ENCODE measurements at regions of chr7 and their contacts with region 1.

Region 1: GRCh38 chr7:136956232-136956631 is 87.8 kb downstream of the CHRM2 start:
- DNase-seq: peak; percentile 87
- ATAC-seq: peak; percentile 70
- H3K4me3 ChIP-seq: no peak overlapping the region
- H3K27ac ChIP-seq: peak overlapping the region; percentile 100
- H3K4me1 ChIP-seq: peaks cover 20% of the 10 kb centered on the region
- H3K27me3 ChIP-seq: no peaks in the 10 kb centered on the region
- CTCF ChIP-seq: no peak
- POLR2A ChIP-seq: no peak
- RAD21 ChIP-seq: no peak

Region 2: GRCh38 chr7:136900005-136900404 is 56.2 kb before region 1 on chr7:
- CTCF ChIA-PET with region 1: interaction called, 3 read pairs
- POLR2A ChIA-PET with region 1: no interaction called
- dilution Hi-C with region 1: no loop called
- in situ Hi-C with region 1: no loop called
- intact Hi-C with region 1: loop called (anchors 5 kb)
- DNase-seq: no peak
- ATAC-seq: no peak
- H3K4me3 ChIP-seq: no peak overlapping the region
- H3K27ac ChIP-seq: no peak overlapping the region
- H3K4me1 ChIP-seq: peaks cover 15% of the 10 kb centered on the region
- H3K27me3 ChIP-seq: no peaks in the 10 kb centered on the region
- CTCF ChIP-seq: no peak
- POLR2A ChIP-seq: no peak
- RAD21 ChIP-seq: no peak

Region 3: DNA sequence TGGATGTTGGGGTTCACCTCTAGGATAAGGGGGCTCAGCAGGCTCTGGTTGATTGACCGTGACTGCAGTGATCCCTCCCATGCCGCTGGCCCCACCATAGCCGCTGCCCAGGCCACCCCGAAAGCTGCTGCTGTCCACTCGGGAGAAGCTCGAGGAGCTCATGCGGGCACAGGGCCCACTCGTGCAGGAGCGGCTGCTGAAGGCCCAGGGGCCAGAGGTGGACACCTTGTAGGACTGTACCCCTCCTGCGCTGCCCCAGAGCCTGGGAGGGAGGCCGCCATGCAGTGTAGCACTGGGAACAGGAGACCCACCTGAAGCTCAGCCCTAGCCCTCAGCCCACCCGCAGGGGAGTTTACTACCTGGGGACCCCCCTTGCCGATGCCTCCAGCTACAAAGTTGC is 17.8 kb before region 1 on chr7:
- CTCF ChIA-PET with region 1: no interaction called
- POLR2A ChIA-PET with region 1: no interaction called
- dilution Hi-C with region 1: no loop called
- in situ Hi-C with region 1: no loop called
- intact Hi-C with region 1: no loop called
- DNase-seq: no peak
- ATAC-seq: no peak
- H3K4me3 ChIP-seq: no peak overlapping the region
- H3K27ac ChIP-seq: no peak overlapping the region
- H3K4me1 ChIP-seq: peaks cover 14% of the 10 kb centered on the region
- H3K27me3 ChIP-seq: no peaks in the 10 kb centered on the region
- CTCF ChIP-seq: no peak
- POLR2A ChIP-seq: no peak
- RAD21 ChIP-seq: no peak

Region 4: DNA sequence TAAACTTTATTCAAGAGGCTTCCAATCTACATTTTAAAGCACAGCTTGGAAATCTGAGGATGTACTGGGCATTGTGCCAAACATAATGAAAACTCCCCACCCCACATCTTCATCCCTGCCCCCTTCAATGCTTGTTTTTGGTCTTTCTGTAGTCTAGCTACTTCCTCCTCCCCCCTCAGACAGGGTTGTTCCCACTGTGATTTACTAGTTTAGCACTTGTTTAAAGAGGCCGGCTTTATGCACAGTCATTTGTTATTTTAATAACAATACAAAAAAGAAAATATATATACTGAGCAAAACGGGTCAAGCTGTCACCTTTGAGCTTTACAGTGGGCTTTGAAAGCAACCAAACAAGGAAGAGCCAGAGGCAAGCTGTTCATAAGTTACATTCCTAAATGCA is 44.8 kb after region 1 on chr7:
- CTCF ChIA-PET with region 1: no interaction called
- POLR2A ChIA-PET with region 1: interaction called, 3 read pairs
- dilution Hi-C with region 1: no loop called
- in situ Hi-C with region 1: no loop called
- intact Hi-C with region 1: loop called (anchors 5 kb)
- DNase-seq: peak; percentile 55
- ATAC-seq: peak; percentile 52
- H3K4me3 ChIP-seq: no peak overlapping the region
- H3K27ac ChIP-seq: peak overlapping the region; percentile 97
- H3K4me1 ChIP-seq: peaks cover 29% of the 10 kb centered on the region
- H3K27me3 ChIP-seq: no peaks in the 10 kb centered on the region
- CTCF ChIP-seq: no peak
- POLR2A ChIP-seq: no peak
- RAD21 ChIP-seq: no peak

Region 5: DNA sequence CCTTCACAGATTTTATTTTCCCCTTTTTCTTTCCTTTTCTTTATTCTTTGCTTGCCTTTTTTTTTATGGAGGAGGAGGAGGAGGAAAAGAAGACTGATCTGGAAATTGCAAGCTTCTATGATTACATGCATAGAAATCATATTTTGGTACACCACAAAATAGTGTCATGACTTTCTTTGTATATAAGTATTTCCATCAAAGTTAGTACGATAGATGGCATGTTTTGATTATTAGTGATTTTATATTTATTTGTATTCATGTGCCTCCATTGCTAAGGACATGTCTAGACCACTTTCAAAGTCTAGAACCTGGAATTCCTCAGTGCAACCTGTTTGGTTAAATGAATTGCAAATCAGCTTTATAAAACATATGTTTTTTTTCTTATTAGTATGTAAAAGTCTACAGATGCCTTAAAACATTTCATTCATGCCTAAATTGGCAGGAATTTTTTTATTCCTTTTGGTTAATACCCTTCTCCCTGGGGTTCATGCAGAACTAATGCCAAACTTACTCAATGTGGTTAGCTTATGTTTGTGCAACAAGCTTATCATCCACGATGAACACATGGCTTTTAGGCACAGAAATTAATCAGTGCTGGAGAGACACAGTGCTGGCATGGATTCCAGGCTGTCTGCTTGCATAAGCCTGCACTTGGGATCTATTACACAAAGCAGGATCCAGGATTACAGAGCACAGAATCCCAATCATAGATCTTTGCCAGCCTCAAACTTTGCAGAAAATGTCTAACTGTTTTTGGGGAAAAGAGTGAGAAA is 125.3 kb after region 1 on chr7:
- CTCF ChIA-PET with region 1: interaction called, 4 read pairs
- POLR2A ChIA-PET with region 1: no interaction called
- dilution Hi-C with region 1: no loop called
- in situ Hi-C with region 1: no loop called
- intact Hi-C with region 1: loop called (anchors 5 kb)
- DNase-seq: peak; percentile 98
- ATAC-seq: peak; percentile 69
- H3K4me3 ChIP-seq: no peak overlapping the region
- H3K27ac ChIP-seq: peak overlapping the region; percentile 99
- H3K4me1 ChIP-seq: peaks cover 13% of the 10 kb centered on the region
- H3K27me3 ChIP-seq: no peaks in the 10 kb centered on the region
- CTCF ChIP-seq: no peak
- POLR2A ChIP-seq: no peak
- RAD21 ChIP-seq: no peak

Measured in IMR-90 (cell line).